ENCODE measurements at regions of chr11 and their contacts with region 1.

Region 1: DNA sequence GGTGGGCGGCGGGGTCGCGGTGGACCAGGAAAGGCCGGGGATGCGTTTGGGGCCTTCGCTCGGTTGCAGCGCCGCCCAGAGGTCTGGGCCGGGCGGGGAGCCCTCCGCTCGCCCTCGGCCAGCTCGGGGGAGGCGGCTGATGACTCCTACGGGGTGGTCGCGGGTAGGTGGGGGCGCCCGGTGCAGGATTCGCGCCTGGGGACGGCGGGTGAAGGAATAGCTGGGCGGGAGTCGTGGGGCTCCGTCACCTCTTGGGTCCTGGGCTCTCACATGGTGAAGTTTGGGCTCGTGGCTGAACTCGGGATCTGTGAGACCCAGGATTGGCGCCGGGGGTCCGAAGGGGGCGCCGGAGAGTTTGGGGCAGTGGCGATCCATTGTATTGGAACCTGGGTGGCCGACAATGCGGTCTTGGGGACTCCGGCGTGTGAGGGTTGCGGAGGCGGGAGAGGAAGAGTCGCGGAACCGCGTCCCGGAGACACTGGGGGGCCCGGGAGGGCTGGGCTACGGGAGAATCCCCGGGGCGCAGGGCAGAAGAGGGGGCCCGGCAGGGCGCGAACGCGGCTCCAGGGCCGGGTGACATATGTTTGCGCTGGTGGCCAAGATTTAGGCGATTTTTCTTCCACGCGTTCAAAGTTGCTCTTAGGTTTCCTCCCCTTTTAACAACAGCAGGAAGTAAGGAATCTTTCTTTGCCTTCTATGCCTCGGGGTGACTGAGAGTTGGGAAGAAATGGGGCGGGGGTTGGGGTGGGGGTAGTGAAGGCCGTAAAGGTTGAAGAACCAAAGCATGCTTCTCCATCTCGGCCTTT is 935 bp downstream of the QSER1 start:
- DNase-seq: peak in 2 of 3 donors; percentile 22 to 26
- H3K4me3 ChIP-seq: peak overlapping the region; percentile 60 to 96 (median 93)
- H3K4me3 Mint-ChIP-seq: peak overlapping the region; percentile 95 to 97
- H3K27ac ChIP-seq: peak overlapping the region; percentile 76
- H3K27ac Mint-ChIP-seq: peak overlapping the region; percentile 79 to 95 (median 92)
- H3K4me1 ChIP-seq: peaks cover 14 to 24% of the 10 kb centered on the region in 2 donors
- H3K4me1 Mint-ChIP-seq: peaks cover 25% of the 10 kb centered on the region
- H3K27me3 ChIP-seq: no peaks in the 10 kb centered on the region
- H3K27me3 Mint-ChIP-seq: peaks cover 2 to 6% (median 3%) of the 10 kb centered on the region in 3 donors
- CTCF ChIP-seq: peak; percentile 64

Region 2: GRCh38 chr11:32583459-32584271 is 309.9 kb before region 1 on chr11 and contains the start of gene EIF3M:
- intact Hi-C with region 1: loop called in 1 of 2 experiments (anchors 10 kb)
- DNase-seq: peak; percentile 95 to 96 (median 96)
- H3K4me3 ChIP-seq: peak within 1 kb of the TSS; percentile 67 to 80 (median 68)
- H3K4me3 Mint-ChIP-seq: peak within 1 kb of the TSS; percentile 91 to 97
- H3K27ac ChIP-seq: peak within 1 kb of the TSS; percentile 72 to 85
- H3K27ac Mint-ChIP-seq: peak within 1 kb of the TSS; percentile 88 to 96 (median 93)
- H3K4me1 ChIP-seq: peaks cover 37 to 48% of the 10 kb centered on the region in 2 donors
- H3K4me1 Mint-ChIP-seq: peaks cover 39% of the 10 kb centered on the region
- H3K27me3 ChIP-seq: no peaks in the 10 kb centered on the region
- H3K27me3 Mint-ChIP-seq: peaks cover 2 to 4% (median 4%) of the 10 kb centered on the region in 3 donors
- CTCF ChIP-seq: no peak
- polyA plus RNA-seq, gene EIF3M: 248 to 316 (median 315) TPM

Region 3: DNA sequence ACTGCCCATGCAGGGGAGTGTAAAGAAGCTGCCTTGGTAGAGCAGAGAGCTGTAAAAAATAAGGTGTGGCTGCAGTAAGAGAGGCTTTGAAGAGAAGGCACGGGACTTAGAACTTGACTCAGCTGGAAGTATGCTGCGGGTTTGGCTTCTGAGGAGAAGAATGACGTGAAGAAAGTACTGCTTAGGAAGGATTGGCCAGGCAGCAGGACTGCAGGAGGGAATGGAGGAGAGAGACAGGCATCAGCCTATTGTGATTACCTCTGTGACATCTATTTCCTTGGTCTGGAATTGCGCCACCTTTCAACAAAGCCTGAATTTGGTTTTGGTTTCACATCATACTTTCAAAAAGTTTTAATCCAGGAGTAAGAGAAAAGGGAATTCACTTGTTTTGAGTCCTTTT is 41.3 kb before region 1 on chr11:
- intact Hi-C with region 1: loop called (anchors 5 kb)
- DNase-seq: peak; percentile 46 to 65 (median 64)
- H3K4me3 ChIP-seq: peak overlapping the region in 2 of 3 experiments; percentile 38 to 62
- H3K4me3 Mint-ChIP-seq: peak overlapping the region; percentile 68 to 86
- H3K27ac ChIP-seq: peak overlapping the region; percentile 56 to 75
- H3K27ac Mint-ChIP-seq: peak overlapping the region; percentile 79 to 96 (median 90)
- H3K4me1 ChIP-seq: peaks cover 48 to 55% of the 10 kb centered on the region in 2 donors
- H3K4me1 Mint-ChIP-seq: peaks cover 45% of the 10 kb centered on the region
- H3K27me3 ChIP-seq: no peaks in the 10 kb centered on the region
- H3K27me3 Mint-ChIP-seq: no peaks in the 10 kb centered on the region
- CTCF ChIP-seq: no peak

Region 4: GRCh38 chr11:32939046-32939445 is 45.5 kb after region 1 on chr11:
- intact Hi-C with region 1: no loop called
- DNase-seq: no peak
- H3K4me3 ChIP-seq: no peak overlapping the region
- H3K4me3 Mint-ChIP-seq: no peak overlapping the region
- H3K27ac ChIP-seq: no peak overlapping the region
- H3K27ac Mint-ChIP-seq: no peak overlapping the region
- H3K4me1 ChIP-seq: no peaks in the 10 kb centered on the region
- H3K4me1 Mint-ChIP-seq: no peaks in the 10 kb centered on the region
- H3K27me3 ChIP-seq: no peaks in the 10 kb centered on the region
- H3K27me3 Mint-ChIP-seq: no peaks in the 10 kb centered on the region
- CTCF ChIP-seq: no peak

Region 5: GRCh38 chr11:33116535-33116934 is 223.0 kb after region 1 on chr11:
- intact Hi-C with region 1: no loop called
- DNase-seq: no peak
- H3K4me3 ChIP-seq: no peak overlapping the region
- H3K4me3 Mint-ChIP-seq: no peak overlapping the region
- H3K27ac ChIP-seq: no peak overlapping the region
- H3K27ac Mint-ChIP-seq: no peak overlapping the region
- H3K4me1 ChIP-seq: no peaks in the 10 kb centered on the region
- H3K4me1 Mint-ChIP-seq: peaks cover 3% of the 10 kb centered on the region
- H3K27me3 ChIP-seq: no peaks in the 10 kb centered on the region
- H3K27me3 Mint-ChIP-seq: no peaks in the 10 kb centered on the region
- CTCF ChIP-seq: no peak